Ascending aorta (tissue), 2 donors: ENCODE measurements at regions of chr7 and their contacts with region 1.

Region 1: GRCh38 chr7:6175645-6176044 is 96.8 kb downstream of the CYTH3 start:
- DNase-seq: peak; percentile 55 to 90
- H3K4me3 ChIP-seq: no peak overlapping the region
- H3K27ac ChIP-seq: peak overlapping the region; percentile 81 to 87
- H3K4me1 ChIP-seq: peaks cover 14 to 59% of the 10 kb centered on the region in 2 donors
- H3K27me3 ChIP-seq: no peaks in the 10 kb centered on the region
- CTCF ChIP-seq: no peak

Region 2: DNA sequence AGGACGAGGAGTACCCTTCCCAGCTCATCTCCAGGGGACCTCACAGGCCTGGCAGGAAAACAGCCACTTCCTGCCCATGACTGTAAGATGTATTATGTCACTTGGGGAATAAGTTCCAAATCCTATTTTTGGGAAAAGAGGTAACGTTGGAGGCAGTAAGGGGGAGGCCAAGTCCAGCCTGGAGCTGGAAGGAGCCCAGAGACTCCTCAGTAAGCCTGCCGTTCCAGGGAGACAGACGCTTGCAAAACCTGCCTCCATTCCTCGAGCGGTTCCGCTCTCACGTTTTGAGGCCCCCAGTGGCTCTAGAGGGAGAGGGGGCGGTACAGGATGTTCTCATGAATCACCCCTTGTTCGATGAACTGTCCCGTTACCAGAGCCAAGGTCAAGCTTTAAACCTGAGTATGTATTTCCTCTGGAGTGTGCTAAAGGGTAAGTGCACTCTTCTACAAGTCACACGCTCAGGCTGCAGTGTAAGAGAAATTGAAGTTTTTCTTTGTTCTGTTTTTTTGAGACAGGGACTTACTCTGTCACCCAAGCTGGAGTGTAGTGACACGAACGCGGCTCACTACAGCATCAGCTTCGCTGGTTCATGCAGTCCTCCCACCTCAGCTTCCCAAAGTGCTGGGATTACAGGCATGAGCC is 142.3 kb after region 1 on chr7:
- intact Hi-C with region 1: loop called (anchors 5 kb)
- DNase-seq: peak; percentile 76 to 94
- H3K4me3 ChIP-seq: peak overlapping the region; percentile 29 to 49
- H3K27ac ChIP-seq: peak overlapping the region; percentile 82 to 85
- H3K4me1 ChIP-seq: peaks cover 3 to 25% of the 10 kb centered on the region in 2 donors
- H3K27me3 ChIP-seq: no peaks in the 10 kb centered on the region
- CTCF ChIP-seq: no peak